BJ (cell line): ENCODE measurements at regions of chr10 and their contacts with region 1.

Region 1: GRCh38 chr10:77004917-77005564 is 632.6 kb downstream of the KCNMA1 start:
- DNase-seq: no peak
- H3K4me3 ChIP-seq: no peak overlapping the region
- H3K27me3 ChIP-seq: no peaks in the 10 kb centered on the region
- CTCF ChIP-seq: peak; percentile 86

Region 2: DNA sequence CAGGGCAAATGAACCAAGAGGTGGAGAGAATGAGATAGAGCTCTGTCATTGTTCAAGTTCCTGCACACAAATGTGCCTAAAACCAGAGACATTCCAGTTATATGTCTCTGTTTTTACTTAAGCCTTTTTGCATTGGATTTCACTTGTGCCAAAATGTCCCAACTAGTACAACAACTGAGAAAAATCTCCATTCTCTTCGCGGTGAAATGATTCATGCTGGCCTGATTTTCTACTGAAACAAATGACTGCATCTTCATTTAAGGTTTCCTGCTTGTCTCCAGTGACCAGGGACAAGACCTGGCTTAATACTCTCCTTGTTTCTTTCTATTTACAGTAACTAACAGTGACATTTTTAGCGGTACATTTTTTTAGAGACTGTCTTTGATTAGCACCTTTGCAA is 82.4 kb before region 1 on chr10:
- CTCF ChIA-PET with region 1: no interaction called
- POLR2A ChIA-PET with region 1: no interaction called
- DNase-seq: no peak
- H3K4me3 ChIP-seq: no peak overlapping the region
- H3K27me3 ChIP-seq: no peaks in the 10 kb centered on the region
- CTCF ChIP-seq: no peak

Region 3: GRCh38 chr10:76984559-76985443 is 20.2 kb before region 1 on chr10:
- CTCF ChIA-PET with region 1: interaction called, 10 read pairs
- POLR2A ChIA-PET with region 1: no interaction called
- DNase-seq: no peak
- H3K4me3 ChIP-seq: no peak overlapping the region
- H3K27me3 ChIP-seq: no peaks in the 10 kb centered on the region
- CTCF ChIP-seq: peak; percentile 93

Region 4: GRCh38 chr10:76991621-76992020 is 13.4 kb before region 1 on chr10:
- CTCF ChIA-PET with region 1: interaction called, 24 read pairs
- POLR2A ChIA-PET with region 1: no interaction called
- DNase-seq: no peak
- H3K4me3 ChIP-seq: no peak overlapping the region
- H3K27me3 ChIP-seq: no peaks in the 10 kb centered on the region
- CTCF ChIP-seq: no peak